ENCODE measurements at regions of chr11 and their contacts with region 1.

Region 1: DNA sequence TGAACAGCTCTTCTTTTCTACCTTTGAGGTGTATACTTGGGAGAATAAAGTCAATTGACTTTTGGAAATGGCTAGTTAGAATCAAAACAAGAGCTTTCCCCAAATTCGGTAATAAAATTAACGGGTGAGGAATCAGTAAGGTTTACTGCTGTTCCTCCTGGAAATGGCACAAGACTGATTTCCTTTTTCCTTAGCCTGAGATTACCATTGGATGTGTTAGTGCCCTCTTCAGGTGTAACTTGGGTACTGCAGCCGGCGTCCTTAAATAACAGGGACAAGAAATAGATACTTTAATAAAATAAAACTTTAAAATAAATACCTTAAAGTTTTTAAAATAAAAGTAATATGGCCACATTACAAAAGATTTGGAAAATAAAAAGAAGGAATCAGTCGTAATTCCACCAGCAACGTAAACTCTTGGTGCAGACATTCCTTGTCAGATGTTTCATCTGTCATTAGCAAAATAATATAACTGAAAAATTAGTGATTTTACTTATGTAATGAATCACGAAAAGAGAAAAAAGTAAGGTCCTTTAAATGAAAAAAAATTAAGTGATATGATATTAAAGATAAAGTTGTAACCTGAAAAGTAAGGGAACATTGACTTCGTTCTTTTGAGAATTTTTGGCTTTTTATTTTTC is 29.7 kb downstream of the ZFTA start:
- DNase-seq: no peak
- H3K4me3 ChIP-seq: no peak overlapping the region
- H3K27ac ChIP-seq: no peak overlapping the region
- H3K4me1 ChIP-seq: no peaks in the 10 kb centered on the region
- H3K27me3 ChIP-seq: no peaks in the 10 kb centered on the region
- CTCF ChIP-seq: peak; percentile 64 to 92 (median 91)
- POLR2A ChIP-seq: no peak

Region 2: DNA sequence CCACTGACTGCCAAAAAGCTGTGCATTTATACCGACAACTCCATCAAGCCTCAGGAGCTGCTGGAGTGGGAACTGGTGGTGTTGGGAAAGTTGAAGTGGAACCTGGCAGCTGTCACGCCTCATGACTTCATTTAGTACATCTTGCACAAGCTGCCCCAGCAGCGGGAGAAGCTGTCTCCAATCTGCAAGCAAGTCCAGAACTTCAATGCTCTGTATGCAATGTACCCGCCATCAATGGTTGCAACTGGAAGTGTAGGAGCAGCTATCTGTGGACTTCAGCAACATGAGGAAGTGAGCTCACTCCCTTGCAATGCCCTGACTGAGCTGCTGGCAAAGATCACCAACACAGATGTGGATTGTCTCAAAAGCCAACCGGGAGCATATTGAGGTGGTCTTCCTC is 495.3 kb before region 1 on chr11 and contains the start of gene SLC22A25:
- intact Hi-C with region 1: loop called (anchors 5 kb)
- DNase-seq: no peak
- H3K4me3 ChIP-seq: no peak within 1 kb of the TSS
- H3K27ac ChIP-seq: no peak within 1 kb of the TSS
- H3K4me1 ChIP-seq: peaks cover 4% of the 10 kb centered on the region
- H3K27me3 ChIP-seq: no peaks in the 10 kb centered on the region
- CTCF ChIP-seq: no peak
- POLR2A ChIP-seq: no peak
- total RNA-seq, gene SLC22A25: 0.98 TPM

Region 3: DNA sequence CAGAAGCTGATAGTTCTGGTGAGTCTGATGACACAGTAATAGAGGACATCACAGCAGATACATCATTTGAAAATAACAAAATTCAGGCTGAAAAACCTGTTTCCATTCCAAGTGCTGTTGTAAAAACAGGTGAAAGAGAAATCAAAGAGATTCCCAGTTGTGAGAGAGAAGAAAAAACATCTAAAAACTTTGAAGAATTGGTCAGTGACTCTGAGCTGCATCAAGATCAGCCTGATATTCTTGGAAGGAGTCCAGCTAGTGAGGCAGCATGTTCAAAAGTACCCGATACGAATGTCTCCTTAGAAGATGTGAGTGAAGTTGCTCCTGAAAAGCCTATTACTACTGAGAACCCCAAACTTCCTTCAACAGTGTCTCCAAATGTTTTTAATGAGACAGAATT is 18.9 kb before region 1 on chr11:
- intact Hi-C with region 1: no loop called
- DNase-seq: no peak
- H3K4me3 ChIP-seq: no peak overlapping the region
- H3K27ac ChIP-seq: no peak overlapping the region
- H3K4me1 ChIP-seq: no peaks in the 10 kb centered on the region
- H3K27me3 ChIP-seq: no peaks in the 10 kb centered on the region
- CTCF ChIP-seq: no peak
- POLR2A ChIP-seq: no peak

Region 4: DNA sequence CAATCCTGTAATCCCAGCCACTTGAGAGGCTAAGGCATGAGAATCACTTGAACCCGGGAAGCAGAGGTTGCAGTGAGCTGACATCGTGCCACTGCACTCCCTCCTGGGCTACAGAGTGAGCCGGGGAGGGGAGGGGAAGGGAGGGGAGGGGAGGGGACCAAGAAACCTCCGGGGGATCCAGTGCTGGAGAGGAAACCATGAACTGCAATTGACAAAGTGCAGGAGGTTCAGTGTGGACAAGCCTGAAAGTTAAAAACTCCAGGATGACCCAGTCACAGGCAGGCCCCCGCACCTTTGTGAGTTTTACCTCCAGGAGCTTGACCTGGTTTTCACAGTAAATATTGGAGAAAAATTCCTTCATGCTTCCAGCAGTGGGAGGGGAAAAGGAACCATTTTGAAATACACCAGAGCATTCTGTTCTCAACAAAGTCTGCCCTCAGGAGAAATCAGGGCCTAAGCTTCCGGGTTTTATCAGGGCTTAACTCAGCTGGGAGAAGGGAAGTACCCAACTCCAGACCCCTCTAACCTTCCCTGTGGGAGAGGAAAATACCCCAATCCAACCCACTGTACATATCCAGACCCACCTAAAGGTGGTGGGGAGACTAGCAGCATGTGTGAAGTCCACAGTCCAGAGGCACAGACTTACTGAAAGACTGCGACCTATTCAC is 45.2 kb after region 1 on chr11:
- intact Hi-C with region 1: no loop called
- DNase-seq: no peak
- H3K4me3 ChIP-seq: no peak overlapping the region
- H3K27ac ChIP-seq: no peak overlapping the region
- H3K4me1 ChIP-seq: no peaks in the 10 kb centered on the region
- H3K27me3 ChIP-seq: no peaks in the 10 kb centered on the region
- CTCF ChIP-seq: no peak
- POLR2A ChIP-seq: no peak